Esophagus muscularis mucosa (tissue), 4 donors: ENCODE measurements at regions of chr4 and their contacts with region 1.

Region 1: GRCh38 chr4:83110223-83110945 is 4.1 kb downstream of the PLAC8 start:
- DNase-seq: peak; percentile 92
- H3K4me3 ChIP-seq: peak overlapping the region; percentile 51 to 74 (median 60)
- H3K27ac ChIP-seq: peak overlapping the region; percentile 12 to 61 (median 44)
- H3K4me1 ChIP-seq: peaks cover 8 to 16% (median 15%) of the 10 kb centered on the region in 4 donors
- H3K27me3 ChIP-seq: no peaks in the 10 kb centered on the region
- CTCF ChIP-seq: peak; percentile 49 to 58 (median 49)
- EP300 ChIP-seq: no peak
- POLR2A ChIP-seq: no peak

Region 2: DNA sequence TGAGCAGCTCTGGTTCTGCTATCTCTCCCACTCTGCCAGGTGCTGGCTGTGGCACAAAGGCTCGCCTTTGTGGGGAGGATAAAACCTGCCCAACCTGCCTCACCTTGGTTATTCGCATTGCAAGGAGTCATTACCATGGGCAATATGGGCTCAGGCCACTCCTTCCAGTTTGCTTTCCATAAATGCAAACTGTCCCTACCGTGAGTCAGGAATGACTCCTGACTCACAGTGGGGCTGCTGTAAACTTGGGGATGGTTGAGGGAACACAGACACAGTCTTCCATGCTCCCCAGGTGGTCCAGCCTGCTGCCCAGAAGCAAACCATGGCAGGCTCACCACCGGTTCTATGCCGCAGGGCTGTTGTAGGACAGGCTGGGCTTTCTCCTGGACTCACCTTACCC is 138.1 kb after region 1 on chr4:
- intact Hi-C with region 1: loop called (anchors 5 kb)
- DNase-seq: no peak
- H3K4me3 ChIP-seq: no peak overlapping the region
- H3K27ac ChIP-seq: no peak overlapping the region
- H3K4me1 ChIP-seq: no peaks in the 10 kb centered on the region
- H3K27me3 ChIP-seq: no peaks in the 10 kb centered on the region
- CTCF ChIP-seq: no peak
- EP300 ChIP-seq: no peak
- POLR2A ChIP-seq: no peak

Region 3: GRCh38 chr4:83334425-83335241 is 224.2 kb after region 1 on chr4 and contains the start of gene HPSE:
- intact Hi-C with region 1: no loop called
- DNase-seq: peak; percentile 92
- H3K4me3 ChIP-seq: peak within 1 kb of the TSS; percentile 48 to 60 (median 52)
- H3K27ac ChIP-seq: no peak within 1 kb of the TSS
- H3K4me1 ChIP-seq: peaks cover 7 to 18% (median 15%) of the 10 kb centered on the region in 4 donors
- H3K27me3 ChIP-seq: peaks cover 0 to 66% (median 0%) of the 10 kb centered on the region in 4 donors
- CTCF ChIP-seq: no peak
- EP300 ChIP-seq: no peak
- POLR2A ChIP-seq: no peak
- total RNA-seq, gene HPSE: 0.42 to 1.5 (median 0.88) TPM